GM12878 (cell line): ENCODE measurements at regions of chr2 and their contacts with region 1.

Region 1: DNA sequence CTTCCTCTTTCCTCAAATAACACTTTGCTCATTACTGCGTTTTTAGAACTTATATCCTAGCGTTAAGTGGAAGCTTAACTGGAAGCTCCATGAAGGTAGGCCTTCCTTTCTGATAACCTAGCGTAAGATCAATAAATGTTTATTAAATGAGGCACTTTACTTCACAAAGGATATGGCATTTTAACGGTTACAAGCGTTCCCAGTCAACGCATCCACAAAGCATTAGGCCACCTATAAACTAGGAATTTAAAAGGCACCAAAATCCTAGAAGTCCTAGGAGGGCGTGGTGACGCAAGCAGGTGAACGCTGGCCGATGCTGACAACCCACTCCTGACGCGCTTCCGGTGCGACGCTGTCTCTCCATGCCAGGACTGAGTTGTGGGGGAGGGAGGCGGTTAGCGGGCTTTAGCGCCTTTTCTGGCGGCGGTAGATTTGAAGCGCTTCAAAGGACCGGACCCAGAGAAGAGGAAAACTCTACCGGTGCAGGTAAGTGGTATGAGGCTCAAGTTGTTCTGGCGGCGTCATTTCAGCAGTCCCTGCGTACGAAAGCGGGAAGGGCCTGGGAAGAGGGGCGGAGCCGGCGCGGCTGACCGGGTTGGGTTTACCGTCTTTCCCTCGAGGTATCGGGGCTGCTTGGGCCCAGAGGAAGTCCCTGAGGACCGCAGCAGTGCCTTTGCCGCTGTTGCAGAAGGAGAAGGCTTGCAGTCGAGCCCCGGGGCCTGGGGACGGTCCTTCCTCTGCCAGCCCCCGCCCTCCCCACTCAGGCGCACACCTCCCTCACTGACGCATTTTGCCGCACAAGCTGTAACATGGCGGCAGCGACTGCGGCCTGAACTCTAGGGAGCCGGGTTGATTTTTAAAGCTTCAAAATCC is at the start of gene PPIG:
- DNase-seq: peak; percentile 60
- ATAC-seq: peak; percentile 96
- H3K4me3 ChIP-seq: peak within 1 kb of the TSS; percentile 89
- H3K27ac ChIP-seq: peak within 1 kb of the TSS; percentile 98
- H3K4me1 ChIP-seq: no peaks in the 10 kb centered on the region
- H3K27me3 ChIP-seq: no peaks in the 10 kb centered on the region
- CTCF ChIP-seq: no peak
- EP300 ChIP-seq: peak; percentile 7 to 8; a peak in 1 of 4 replicates
- POLR2A ChIP-seq: peak; percentile 91
- RAD21 ChIP-seq: no peak
- polyA plus RNA-seq, gene PPIG: 141 to 147 TPM

Region 2: DNA sequence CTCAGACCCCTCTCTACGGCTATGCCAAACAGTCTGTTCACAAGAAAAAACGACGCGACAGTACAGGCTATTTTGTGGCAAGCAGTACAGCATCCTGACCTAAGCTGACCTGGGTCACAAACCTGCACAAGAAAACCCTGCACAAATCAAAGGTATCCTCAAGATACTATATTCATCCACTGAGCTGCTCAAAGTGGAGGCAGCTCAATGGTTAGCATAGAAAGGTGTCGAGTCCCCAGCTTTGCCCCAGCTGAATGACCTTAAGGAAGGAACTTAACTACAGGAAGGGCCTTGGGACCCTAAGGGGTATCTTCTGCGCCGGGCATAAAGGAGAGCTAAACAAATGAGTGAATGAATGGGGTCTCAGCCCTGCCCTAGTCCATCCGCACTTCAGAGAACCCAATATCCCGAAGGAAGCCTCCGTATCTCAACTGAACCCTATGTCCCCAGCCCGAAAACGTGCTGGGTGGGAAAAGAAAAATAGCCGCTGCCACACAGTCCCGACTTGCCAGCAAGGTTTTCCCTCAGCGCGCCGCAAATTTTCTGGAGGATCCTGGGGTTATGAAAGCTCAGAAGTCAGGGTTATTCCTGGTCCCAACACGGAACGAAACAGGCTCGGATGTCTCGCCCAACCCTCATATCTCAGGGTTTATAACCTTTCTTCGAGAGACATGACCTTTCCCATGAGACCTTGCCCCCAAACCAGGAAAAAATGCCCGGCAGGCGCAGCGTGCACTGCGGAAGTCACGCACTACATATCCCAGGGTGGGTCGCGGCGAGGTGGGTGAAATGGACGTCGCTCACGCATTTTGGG is 10.9 kb before region 1 on chr2 and contains the start of gene FASTKD1:
- CTCF ChIA-PET with region 1: interaction called, 17 read pairs
- POLR2A ChIA-PET with region 1: interaction called, 25 read pairs
- RAD21 ChIA-PET with region 1: interaction called, 21 read pairs
- SMC1A ChIA-PET with region 1: interaction called, 26 read pairs
- in situ Hi-C with region 1: no loop called
- intact Hi-C with region 1: no loop called
- DNase-seq: peak; percentile 79
- ATAC-seq: peak; percentile 98
- H3K4me3 ChIP-seq: peak within 1 kb of the TSS; percentile 81
- H3K27ac ChIP-seq: peak within 1 kb of the TSS; percentile 71
- H3K4me1 ChIP-seq: no peaks in the 10 kb centered on the region
- H3K27me3 ChIP-seq: no peaks in the 10 kb centered on the region
- CTCF ChIP-seq: no peak
- EP300 ChIP-seq: no peak
- POLR2A ChIP-seq: peak; percentile 46; the same call in 1 of the 2 replicates
- RAD21 ChIP-seq: no peak
- polyA plus RNA-seq, gene FASTKD1: 60.5 to 66.3 TPM

Region 3: DNA sequence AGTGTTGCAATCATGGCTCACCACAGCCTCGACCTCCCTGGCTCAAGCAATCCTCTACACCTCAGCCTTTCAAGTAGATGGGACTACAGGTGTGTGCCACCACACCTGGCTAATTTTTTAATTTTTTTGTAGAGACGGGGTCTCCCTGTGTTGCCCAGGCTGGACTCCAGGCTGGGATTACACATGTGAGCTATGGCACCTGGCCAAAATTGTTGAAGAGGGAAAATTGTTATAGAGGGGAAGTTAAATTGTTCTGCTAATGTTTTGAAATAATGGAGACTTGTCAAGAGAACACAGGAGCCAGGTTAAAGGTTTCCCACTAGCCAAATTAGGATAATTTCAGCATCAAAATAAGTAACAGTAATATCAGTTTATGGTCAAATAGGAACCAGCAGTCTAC is 25.0 kb after region 1 on chr2:
- CTCF ChIA-PET with region 1: no interaction called
- POLR2A ChIA-PET with region 1: interaction called, 11 read pairs
- RAD21 ChIA-PET with region 1: no interaction called
- SMC1A ChIA-PET with region 1: no interaction called
- in situ Hi-C with region 1: no loop called
- intact Hi-C with region 1: no loop called
- DNase-seq: no peak
- ATAC-seq: no peak
- H3K4me3 ChIP-seq: no peak overlapping the region
- H3K27ac ChIP-seq: no peak overlapping the region
- H3K4me1 ChIP-seq: no peaks in the 10 kb centered on the region
- H3K27me3 ChIP-seq: no peaks in the 10 kb centered on the region
- CTCF ChIP-seq: no peak
- EP300 ChIP-seq: no peak
- POLR2A ChIP-seq: no peak
- RAD21 ChIP-seq: no peak